ENCODE measurements at regions of chr15 and their contacts with region 1.

Region 1: DNA sequence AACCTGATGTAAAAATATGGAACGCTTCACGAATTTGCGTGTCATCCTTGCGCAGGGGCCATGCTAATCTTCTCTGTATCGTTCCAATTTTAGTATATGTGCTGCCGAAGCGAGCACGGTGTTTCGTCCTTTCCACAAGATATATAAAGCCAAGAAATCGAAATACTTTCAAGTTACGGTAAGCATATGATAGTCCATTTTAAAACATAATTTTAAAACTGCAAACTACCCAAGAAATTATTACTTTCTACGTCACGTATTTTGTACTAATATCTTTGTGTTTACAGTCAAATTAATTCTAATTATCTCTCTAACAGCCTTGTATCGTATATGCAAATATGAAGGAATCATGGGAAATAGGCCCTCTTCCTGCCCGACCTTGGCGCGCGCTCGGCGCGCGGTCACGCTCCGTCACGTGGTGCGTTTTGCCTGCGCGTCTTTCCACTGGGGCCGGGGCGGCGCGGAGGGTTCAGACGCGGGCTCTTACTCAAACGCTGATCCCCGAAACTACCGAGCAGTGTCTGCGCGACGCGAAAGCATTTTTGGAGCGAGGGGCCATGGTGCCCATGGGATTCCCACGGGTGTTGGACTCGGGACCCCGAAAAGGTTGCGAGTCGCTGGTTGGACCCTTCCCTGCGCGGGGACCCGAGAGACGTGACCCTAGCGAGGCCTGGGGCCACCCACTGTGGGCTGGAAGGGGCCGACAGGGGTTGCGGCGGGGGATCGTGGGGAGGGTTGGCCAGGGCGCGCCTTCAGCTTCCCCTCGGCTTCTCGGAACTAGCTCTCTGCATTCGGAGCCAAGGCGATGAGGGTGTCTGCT is at the start of gene RNU6-1:
- DNase-seq: peak; percentile 94
- H3K4me3 ChIP-seq: peak within 1 kb of the TSS; percentile 73 to 97
- H3K27ac ChIP-seq: peak within 1 kb of the TSS; percentile 83 to 90
- H3K4me1 ChIP-seq: peaks cover 0 to 12% of the 10 kb centered on the region in 2 experiments; a peak in 2 of 4 replicates
- H3K27me3 ChIP-seq: no peaks in the 10 kb centered on the region
- CTCF ChIP-seq: no peak
- EP300 ChIP-seq: no peak
- RAD21 ChIP-seq: no peak
- polyA plus RNA-seq, gene RNU6-1: not detected in 2 replicates

Region 2: GRCh38 chr15:67824976-67825879 is 14.9 kb before region 1 on chr15 and contains the start of gene SKOR1:
- CTCF ChIA-PET with region 1: interaction called, 14 read pairs
- POLR2A ChIA-PET with region 1: no interaction called
- DNase-seq: peak; percentile 65
- H3K4me3 ChIP-seq: no peak within 1 kb of the TSS; a peak in 1 of 4 replicates
- H3K27ac ChIP-seq: no peak within 1 kb of the TSS
- H3K4me1 ChIP-seq: peaks cover 0 to 22% of the 10 kb centered on the region in 2 experiments; a peak in 2 of 4 replicates
- H3K27me3 ChIP-seq: peaks cover 36% of the 10 kb centered on the region
- CTCF ChIP-seq: no peak
- EP300 ChIP-seq: no peak
- RAD21 ChIP-seq: no peak
- polyA plus RNA-seq, gene SKOR1: 0.18 and 0.26 TPM in 2 replicates

Region 3: DNA sequence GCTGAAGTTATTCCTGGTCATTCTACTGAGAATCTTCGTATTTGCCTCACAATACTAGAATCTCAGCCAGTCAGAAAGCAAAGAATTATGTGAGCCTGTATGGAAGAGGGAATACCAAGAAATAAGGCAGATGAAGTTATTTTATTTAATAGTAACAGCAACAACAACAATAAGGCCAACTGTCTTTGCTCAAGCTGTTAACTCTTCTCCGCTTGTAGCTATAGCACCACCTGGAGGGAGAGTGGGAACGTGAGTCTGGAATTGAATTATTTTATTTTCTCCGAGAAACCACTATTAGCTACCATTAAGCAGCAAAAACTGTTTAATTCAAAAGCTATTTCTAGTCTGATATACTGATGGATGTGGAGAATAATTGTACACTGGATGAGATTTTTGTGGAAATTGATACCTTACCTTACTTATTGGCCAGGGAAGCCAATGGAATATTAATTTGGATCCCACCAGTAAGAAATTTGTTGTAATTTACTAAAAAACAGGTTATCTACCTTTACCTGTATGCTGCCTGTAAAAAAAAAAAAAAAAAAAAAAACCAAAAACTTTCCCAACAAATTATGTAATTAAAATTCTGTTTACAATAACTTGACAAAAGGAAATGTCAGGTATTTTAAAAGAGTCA is 314.9 kb after region 1 on chr15:
- CTCF ChIA-PET with region 1: interaction called, 10 read pairs
- POLR2A ChIA-PET with region 1: interaction called, 3 read pairs
- DNase-seq: peak; percentile 39
- H3K4me3 ChIP-seq: no peak overlapping the region; a peak in 1 of 4 replicates
- H3K27ac ChIP-seq: no peak overlapping the region
- H3K4me1 ChIP-seq: peaks cover 0 to 2% of the 10 kb centered on the region in 2 experiments; a peak in 2 of 4 replicates
- H3K27me3 ChIP-seq: no peaks in the 10 kb centered on the region
- CTCF ChIP-seq: peak; percentile 86
- EP300 ChIP-seq: no peak
- RAD21 ChIP-seq: peak; percentile 90

Measured in SK-N-SH (cell line).